ENCODE measurements at regions of chr13 and their contacts with region 1.

Region 1: DNA sequence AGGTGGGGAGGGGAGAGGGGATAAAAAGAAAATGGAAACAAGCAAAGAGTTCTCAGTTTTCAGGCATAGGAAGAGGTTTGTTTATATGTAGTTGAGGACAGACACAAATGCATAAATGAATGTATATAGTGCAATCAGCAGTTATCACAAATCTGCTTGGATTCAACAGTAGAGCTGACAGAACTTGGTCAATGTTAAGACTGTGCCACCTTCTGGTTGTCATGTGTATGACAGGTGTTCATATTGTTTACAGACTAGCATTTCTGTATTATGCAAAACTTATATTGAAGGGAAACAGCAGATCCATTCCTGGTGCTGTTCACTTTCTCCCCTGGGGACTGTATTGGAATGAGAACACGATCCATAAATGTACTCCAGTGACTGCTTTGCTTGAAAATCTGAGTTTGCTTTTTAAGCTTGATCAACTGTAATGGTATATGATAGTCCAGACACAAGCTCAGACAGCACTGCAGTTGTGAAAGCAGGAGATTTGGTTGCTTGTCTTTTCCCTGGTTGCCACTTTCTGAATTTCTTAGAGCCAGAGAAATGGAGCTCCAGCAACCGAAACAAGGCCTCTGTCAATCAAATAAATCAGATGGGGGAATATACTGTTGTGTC is 319.5 kb upstream of the OBI1 start:
- DNase-seq: peak; percentile 24
- ATAC-seq: peak; percentile 92
- H3K4me3 ChIP-seq: no peak overlapping the region
- H3K27ac ChIP-seq: no peak overlapping the region
- H3K4me1 ChIP-seq: no peaks in the 10 kb centered on the region
- H3K27me3 ChIP-seq: no peaks in the 10 kb centered on the region; a peak in 1 of 4 replicates
- CTCF ChIP-seq: peak; percentile 66 to 77 (median 74); a peak in 5 of 6 replicates
- EP300 ChIP-seq: no peak
- POLR2A ChIP-seq: no peak
- RAD21 ChIP-seq: peak; percentile 83

Region 2: GRCh38 chr13:78241278-78241919 is 737.1 kb before region 1 on chr13:
- CTCF ChIA-PET with region 1: interaction called, 50 read pairs
- POLR2A ChIA-PET with region 1: no interaction called
- RAD21 ChIA-PET with region 1: interaction called, 42 read pairs
- SMC1A ChIA-PET with region 1: interaction called, 31 read pairs
- in situ Hi-C with region 1: loop called (anchors 10 kb)
- intact Hi-C with region 1: loop called (anchors 5 kb)
- DNase-seq: no peak
- ATAC-seq: peak; percentile 77
- H3K4me3 ChIP-seq: no peak overlapping the region
- H3K27ac ChIP-seq: no peak overlapping the region
- H3K4me1 ChIP-seq: no peaks in the 10 kb centered on the region
- H3K27me3 ChIP-seq: no peaks in the 10 kb centered on the region
- CTCF ChIP-seq: peak; percentile 54 to 74 (median 70)
- EP300 ChIP-seq: no peak
- POLR2A ChIP-seq: no peak
- RAD21 ChIP-seq: peak; percentile 87

Region 3: GRCh38 chr13:78420814-78421213 is 557.7 kb before region 1 on chr13:
- CTCF ChIA-PET with region 1: interaction called, 9 read pairs
- POLR2A ChIA-PET with region 1: interaction called, 5 read pairs
- RAD21 ChIA-PET with region 1: interaction called, 12 read pairs
- SMC1A ChIA-PET with region 1: interaction called, 3 read pairs
- in situ Hi-C with region 1: no loop called
- intact Hi-C with region 1: no loop called
- DNase-seq: peak; percentile 37
- ATAC-seq: peak; percentile 100
- H3K4me3 ChIP-seq: no peak overlapping the region
- H3K27ac ChIP-seq: no peak overlapping the region
- H3K4me1 ChIP-seq: no peaks in the 10 kb centered on the region
- H3K27me3 ChIP-seq: no peaks in the 10 kb centered on the region
- CTCF ChIP-seq: peak in 1 of 3 experiments; percentile 42; a peak in 2 of 6 replicates
- EP300 ChIP-seq: no peak
- POLR2A ChIP-seq: no peak
- RAD21 ChIP-seq: peak; percentile 8; the same call in 1 of the 2 replicates

Region 4: DNA sequence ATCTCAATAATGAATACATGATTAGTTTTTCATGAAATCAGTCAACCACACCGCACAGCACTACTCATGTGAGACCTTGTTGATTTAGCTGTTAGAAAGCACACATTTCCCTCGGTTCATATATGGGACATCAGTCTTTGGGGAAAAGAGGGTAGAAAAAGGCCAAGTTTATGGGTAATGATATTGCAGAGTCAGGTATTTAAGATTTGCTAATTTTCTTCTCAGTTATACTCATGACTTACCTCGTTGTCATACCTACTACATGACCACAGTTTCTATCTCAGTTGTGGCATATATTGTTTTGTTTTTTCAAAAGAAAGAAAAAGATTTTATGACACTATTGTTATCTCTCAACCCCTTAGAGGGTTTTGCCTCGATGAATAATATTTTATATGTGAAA is 540.7 kb before region 1 on chr13:
- CTCF ChIA-PET with region 1: no interaction called
- POLR2A ChIA-PET with region 1: no interaction called
- RAD21 ChIA-PET with region 1: no interaction called
- SMC1A ChIA-PET with region 1: no interaction called
- in situ Hi-C with region 1: no loop called
- intact Hi-C with region 1: no loop called
- DNase-seq: no peak
- ATAC-seq: no peak; the same call in 2 of the 3 replicates
- H3K4me3 ChIP-seq: no peak overlapping the region
- H3K27ac ChIP-seq: no peak overlapping the region
- H3K4me1 ChIP-seq: no peaks in the 10 kb centered on the region
- H3K27me3 ChIP-seq: no peaks in the 10 kb centered on the region
- CTCF ChIP-seq: no peak
- EP300 ChIP-seq: no peak
- POLR2A ChIP-seq: no peak
- RAD21 ChIP-seq: no peak

Region 5: DNA sequence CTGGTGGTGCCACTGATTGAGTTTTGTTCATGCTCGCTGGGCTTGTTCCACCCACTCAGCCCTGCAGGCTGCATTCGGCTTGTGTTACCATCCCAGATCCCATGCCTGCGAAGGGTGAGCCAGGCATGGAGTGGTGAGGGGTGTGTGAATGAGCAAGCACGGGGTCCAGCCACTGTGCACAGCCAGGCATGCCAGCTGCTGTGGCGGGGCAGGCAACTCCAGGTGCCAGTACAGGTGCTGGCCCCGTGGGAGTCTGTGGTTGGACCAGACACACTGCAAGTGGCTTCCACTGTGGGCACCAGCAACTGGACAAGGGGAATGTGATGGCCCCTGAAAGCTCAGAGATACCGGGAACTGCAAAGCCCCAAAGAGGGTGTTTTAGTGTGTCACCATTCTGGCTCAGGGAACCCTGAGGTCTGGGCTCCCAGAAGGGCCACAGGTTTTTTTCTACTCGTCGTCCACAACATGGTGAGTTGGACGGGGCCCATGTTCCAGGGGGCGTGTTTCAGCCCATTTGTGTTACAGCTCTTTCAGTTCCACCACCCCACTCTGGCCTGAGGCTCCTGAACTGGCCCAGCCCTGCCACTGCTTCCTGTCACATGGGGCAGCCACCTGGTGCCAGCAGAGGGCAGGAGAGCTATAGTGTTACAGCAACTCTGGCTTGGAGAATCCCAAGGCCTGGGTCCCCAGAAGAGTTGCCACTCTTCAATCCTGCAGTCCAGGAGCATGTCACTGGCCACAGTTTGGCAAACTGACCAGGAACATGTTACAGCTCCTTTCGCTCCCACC is 102.5 kb before region 1 on chr13:
- CTCF ChIA-PET with region 1: interaction called, 20 read pairs
- POLR2A ChIA-PET with region 1: no interaction called
- RAD21 ChIA-PET with region 1: interaction called, 7 read pairs
- SMC1A ChIA-PET with region 1: interaction called, 10 read pairs
- in situ Hi-C with region 1: no loop called
- intact Hi-C with region 1: no loop called
- DNase-seq: no peak
- ATAC-seq: peak; percentile 97
- H3K4me3 ChIP-seq: no peak overlapping the region
- H3K27ac ChIP-seq: no peak overlapping the region
- H3K4me1 ChIP-seq: no peaks in the 10 kb centered on the region
- H3K27me3 ChIP-seq: no peaks in the 10 kb centered on the region
- CTCF ChIP-seq: peak in 2 of 3 experiments; percentile 25 to 38; a peak in 2 of 6 replicates
- EP300 ChIP-seq: no peak
- POLR2A ChIP-seq: no peak
- RAD21 ChIP-seq: peak; percentile 48

Region 6: GRCh38 chr13:78993792-78994191 is 15.3 kb after region 1 on chr13:
- CTCF ChIA-PET with region 1: interaction called, 19 read pairs
- POLR2A ChIA-PET with region 1: interaction called, 6 read pairs
- RAD21 ChIA-PET with region 1: interaction called, 7 read pairs
- SMC1A ChIA-PET with region 1: interaction called, 19 read pairs
- in situ Hi-C with region 1: no loop called
- intact Hi-C with region 1: no loop called
- DNase-seq: peak; percentile 21
- ATAC-seq: peak; percentile 76
- H3K4me3 ChIP-seq: no peak overlapping the region
- H3K27ac ChIP-seq: no peak overlapping the region
- H3K4me1 ChIP-seq: no peaks in the 10 kb centered on the region
- H3K27me3 ChIP-seq: no peaks in the 10 kb centered on the region
- CTCF ChIP-seq: no peak
- EP300 ChIP-seq: peak; percentile 75 to 79; a peak in 3 of 4 replicates
- POLR2A ChIP-seq: no peak
- RAD21 ChIP-seq: no peak

Region 7: DNA sequence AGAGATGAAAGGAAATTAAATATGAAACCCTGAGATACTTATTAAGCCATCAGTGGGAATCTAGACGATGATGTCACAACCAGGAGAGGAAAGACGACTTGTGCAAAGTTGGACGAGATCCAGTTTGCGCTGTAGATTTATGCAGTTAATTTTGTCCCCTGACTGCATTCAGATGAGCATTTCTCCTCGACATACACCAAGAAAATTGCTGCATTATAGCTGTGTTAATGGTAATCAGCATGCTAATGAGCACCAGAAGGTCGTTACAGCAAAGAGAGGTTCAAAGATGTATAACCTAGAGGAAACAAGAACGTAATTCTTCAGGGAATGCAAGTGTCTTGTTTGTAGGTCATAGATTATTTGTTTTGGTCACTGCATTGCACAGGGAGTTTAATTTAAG is 55.9 kb after region 1 on chr13:
- CTCF ChIA-PET with region 1: interaction called, 15 read pairs
- POLR2A ChIA-PET with region 1: no interaction called
- RAD21 ChIA-PET with region 1: interaction called, 4 read pairs
- SMC1A ChIA-PET with region 1: interaction called, 4 read pairs
- in situ Hi-C with region 1: no loop called
- intact Hi-C with region 1: no loop called
- DNase-seq: no peak
- ATAC-seq: no peak
- H3K4me3 ChIP-seq: no peak overlapping the region
- H3K27ac ChIP-seq: no peak overlapping the region
- H3K4me1 ChIP-seq: no peaks in the 10 kb centered on the region
- H3K27me3 ChIP-seq: no peaks in the 10 kb centered on the region; a peak in 1 of 4 replicates
- CTCF ChIP-seq: no peak
- EP300 ChIP-seq: no peak
- POLR2A ChIP-seq: no peak
- RAD21 ChIP-seq: no peak

Region 8: DNA sequence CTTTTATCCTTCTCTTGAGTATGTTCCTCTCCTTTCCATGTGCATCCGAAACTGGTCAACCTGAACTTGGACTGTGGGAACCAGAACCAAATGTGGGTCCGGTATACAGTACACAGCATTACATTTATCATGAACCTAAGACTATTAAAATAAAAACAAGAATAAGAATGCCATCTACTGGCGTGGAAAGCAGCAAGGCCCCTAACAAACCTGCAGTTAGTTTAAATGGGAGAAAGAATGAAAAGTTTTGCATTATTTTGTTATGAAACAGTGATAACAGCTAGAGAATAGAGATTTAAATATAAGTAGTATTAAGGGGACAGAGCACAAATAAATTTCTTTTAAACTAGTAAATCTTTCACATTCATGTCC is 268.1 kb after region 1 on chr13:
- CTCF ChIA-PET with region 1: interaction called, 5 read pairs
- POLR2A ChIA-PET with region 1: no interaction called
- RAD21 ChIA-PET with region 1: interaction called, 3 read pairs
- SMC1A ChIA-PET with region 1: interaction called, 5 read pairs
- in situ Hi-C with region 1: no loop called
- intact Hi-C with region 1: loop called (anchors 2 kb)
- DNase-seq: no peak
- ATAC-seq: peak; percentile 79
- H3K4me3 ChIP-seq: no peak overlapping the region
- H3K27ac ChIP-seq: no peak overlapping the region
- H3K4me1 ChIP-seq: peaks cover 7% of the 10 kb centered on the region
- H3K27me3 ChIP-seq: no peaks in the 10 kb centered on the region
- CTCF ChIP-seq: peak; percentile 23 to 50 (median 42); a peak in 5 of 6 replicates
- EP300 ChIP-seq: no peak
- POLR2A ChIP-seq: no peak
- RAD21 ChIP-seq: peak; percentile 68

Region 9: DNA sequence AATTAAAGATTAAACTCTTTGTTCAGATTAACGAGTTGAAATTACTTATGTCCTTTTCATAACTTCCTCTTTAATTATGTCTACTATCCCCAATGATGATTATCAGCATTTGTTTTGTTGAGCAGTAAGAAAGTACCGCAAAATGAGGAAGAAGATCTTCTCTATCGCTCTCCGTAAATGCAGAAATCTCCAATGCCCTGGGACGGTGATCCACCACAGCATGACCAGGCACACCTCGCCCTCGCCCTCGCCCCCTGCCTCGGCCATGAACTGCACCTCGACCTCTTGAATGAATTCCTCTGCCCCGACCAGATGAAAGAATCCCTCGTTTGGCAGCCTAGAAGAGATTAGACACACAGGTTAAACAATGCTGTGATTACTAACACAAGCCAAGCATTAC is 358.5 kb after region 1 on chr13:
- CTCF ChIA-PET with region 1: no interaction called
- POLR2A ChIA-PET with region 1: no interaction called
- RAD21 ChIA-PET with region 1: no interaction called
- SMC1A ChIA-PET with region 1: no interaction called
- in situ Hi-C with region 1: no loop called
- intact Hi-C with region 1: no loop called
- DNase-seq: no peak
- ATAC-seq: no peak
- H3K4me3 ChIP-seq: no peak overlapping the region
- H3K27ac ChIP-seq: no peak overlapping the region
- H3K4me1 ChIP-seq: no peaks in the 10 kb centered on the region
- H3K27me3 ChIP-seq: no peaks in the 10 kb centered on the region
- CTCF ChIP-seq: no peak
- EP300 ChIP-seq: no peak
- POLR2A ChIP-seq: no peak
- RAD21 ChIP-seq: no peak